ENCODE measurements at regions of chr3 and their contacts with region 1.

Region 1: DNA sequence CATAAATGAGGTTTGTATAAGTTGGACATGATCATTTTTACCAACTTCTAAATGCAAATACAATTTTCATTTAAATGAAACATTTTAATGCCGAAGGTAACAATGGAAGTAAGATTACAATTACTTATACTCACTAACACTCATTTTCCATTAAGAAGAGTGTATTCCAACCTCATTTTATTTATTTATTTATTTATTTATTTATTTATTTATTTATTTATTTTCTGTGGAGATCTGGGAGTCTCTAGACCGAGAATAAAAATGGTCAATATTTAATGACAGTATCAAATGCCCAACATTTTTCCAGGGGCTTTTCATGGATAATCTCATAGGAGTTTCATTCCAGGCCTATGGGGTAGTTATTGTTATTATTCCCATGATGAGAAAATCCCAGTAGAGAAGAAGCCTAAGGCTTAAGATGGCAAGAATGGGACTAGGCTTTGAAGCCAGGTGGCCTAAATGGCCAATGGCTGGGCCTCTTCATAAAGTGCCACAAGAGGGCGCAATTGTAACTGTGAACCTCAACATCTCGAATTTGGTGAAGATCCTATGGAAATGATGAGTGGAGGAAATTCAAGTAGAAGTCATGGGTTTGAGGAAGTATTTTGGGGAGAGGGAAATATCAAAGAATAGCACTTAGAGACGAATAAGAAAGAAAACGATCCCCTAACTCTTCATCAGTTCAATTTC is 21.3 kb downstream of the VGLL3 start:
- DNase-seq: peak in 2 of 3 donors; percentile 10 to 23
- H3K4me3 ChIP-seq: no peak overlapping the region
- H3K4me3 Mint-ChIP-seq: no peak overlapping the region
- H3K27ac ChIP-seq: no peak overlapping the region
- H3K27ac Mint-ChIP-seq: peak overlapping the region in 1 of 7 donors; percentile 73
- H3K4me1 ChIP-seq: no peaks in the 10 kb centered on the region
- H3K4me1 Mint-ChIP-seq: no peaks in the 10 kb centered on the region
- H3K27me3 ChIP-seq: no peaks in the 10 kb centered on the region
- H3K27me3 Mint-ChIP-seq: peaks cover 0 to 2% (median 0%) of the 10 kb centered on the region in 3 donors
- CTCF ChIP-seq: peak; percentile 81

Region 2: GRCh38 chr3:86774082-86774691 is 195.5 kb before region 1 on chr3:
- intact Hi-C with region 1: no loop called
- DNase-seq: no peak
- H3K4me3 ChIP-seq: no peak overlapping the region
- H3K4me3 Mint-ChIP-seq: no peak overlapping the region
- H3K27ac ChIP-seq: no peak overlapping the region
- H3K27ac Mint-ChIP-seq: no peak overlapping the region
- H3K4me1 ChIP-seq: no peaks in the 10 kb centered on the region
- H3K4me1 Mint-ChIP-seq: no peaks in the 10 kb centered on the region
- H3K27me3 ChIP-seq: no peaks in the 10 kb centered on the region
- H3K27me3 Mint-ChIP-seq: no peaks in the 10 kb centered on the region
- CTCF ChIP-seq: peak; percentile 12

Region 3: DNA sequence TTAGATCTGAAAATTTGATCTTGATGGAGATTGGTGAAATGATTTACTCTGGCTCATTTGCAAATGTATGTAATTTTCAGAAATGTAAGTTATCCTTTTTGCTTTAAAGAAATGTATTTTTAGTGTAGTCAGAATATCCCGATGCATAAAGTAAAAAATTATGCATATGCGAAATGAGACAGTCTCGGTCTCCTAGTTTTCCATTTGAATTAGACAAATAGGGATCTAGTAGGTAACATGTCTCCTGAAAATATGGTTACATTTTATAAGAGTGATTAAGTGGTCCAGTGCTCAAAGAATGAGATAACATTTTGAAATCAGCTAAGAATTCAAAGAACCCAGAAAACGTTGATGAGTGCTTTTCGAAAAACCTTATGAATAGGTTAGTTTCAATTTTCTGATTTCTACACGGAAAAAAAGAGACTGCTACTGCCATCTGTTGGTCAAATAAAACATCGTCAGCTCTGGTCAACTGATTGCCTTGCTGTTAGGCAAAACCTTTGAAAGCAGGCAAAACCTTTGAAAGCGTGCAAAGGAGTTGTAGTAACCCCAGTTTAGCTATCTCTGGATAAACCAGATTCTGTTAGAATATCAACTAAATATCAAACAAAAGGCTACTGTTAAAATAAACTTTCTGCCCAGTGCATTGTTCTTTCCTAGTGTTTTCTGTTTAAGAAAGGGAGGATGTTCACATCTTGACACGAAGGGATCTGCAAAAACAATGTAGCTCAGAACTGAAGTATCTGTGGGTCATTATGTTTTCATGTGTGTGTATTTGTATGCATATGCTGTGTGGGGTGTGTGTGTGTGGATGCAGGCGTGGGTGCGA is 198.2 kb after region 1 on chr3:
- intact Hi-C with region 1: loop called in 1 of 2 experiments (anchors 5 kb)
- DNase-seq: peak in 2 of 3 donors; percentile 13 to 30
- H3K4me3 ChIP-seq: peak overlapping the region in 1 of 3 experiments; percentile 19
- H3K4me3 Mint-ChIP-seq: peak overlapping the region in 1 of 2 donors; percentile 76
- H3K27ac ChIP-seq: no peak overlapping the region
- H3K27ac Mint-ChIP-seq: peak overlapping the region in 1 of 7 donors; percentile 25
- H3K4me1 ChIP-seq: no peaks in the 10 kb centered on the region
- H3K4me1 Mint-ChIP-seq: peaks cover 4% of the 10 kb centered on the region
- H3K27me3 ChIP-seq: no peaks in the 10 kb centered on the region
- H3K27me3 Mint-ChIP-seq: peaks cover 0 to 3% (median 0%) of the 10 kb centered on the region in 3 donors
- CTCF ChIP-seq: peak; percentile 71

Measured in CD14-positive monocyte (primary cell).